ENCODE measurements at regions of chr16 and their contacts with region 1.

Region 1: DNA sequence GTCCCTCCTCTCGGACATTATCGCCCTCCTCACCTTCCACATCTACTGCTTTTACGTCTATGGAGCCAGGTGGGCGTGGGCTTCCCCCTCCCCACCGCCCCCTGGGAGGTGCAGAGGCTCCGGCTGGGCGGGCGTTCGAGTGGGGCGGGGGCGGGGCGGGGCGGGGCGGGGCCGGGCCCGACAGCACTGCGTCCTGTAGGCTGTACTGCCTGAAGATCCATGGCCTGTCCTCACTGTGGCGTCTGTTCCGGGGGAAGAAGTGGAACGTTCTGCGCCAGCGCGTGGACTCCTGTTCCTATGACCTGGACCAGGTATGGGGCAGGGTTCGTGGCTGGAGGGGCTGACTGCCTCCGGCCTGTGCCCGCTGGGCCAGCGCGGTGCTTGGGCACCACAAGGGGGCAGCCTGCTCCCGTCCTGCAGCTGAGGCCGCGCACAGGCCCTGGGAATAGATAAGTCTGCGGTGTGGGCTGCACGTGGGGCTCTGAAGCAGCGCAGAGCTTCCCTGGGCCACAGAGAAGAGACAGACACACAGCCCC is 9.2 kb downstream of the PIGQ start:
- DNase-seq: peak; percentile 64 to 94
- H3K4me3 ChIP-seq: peak overlapping the region in 3 of 4 experiments; percentile 18 to 47 (median 29); a peak in 5 of 8 replicates
- H3K27ac ChIP-seq: no peak overlapping the region
- H3K4me1 ChIP-seq: peaks cover 0 to 16% (median 12%) of the 10 kb centered on the region in 4 experiments; a peak in 6 of 7 replicates
- H3K27me3 ChIP-seq: peaks cover 0 to 2% (median 0%) of the 10 kb centered on the region in 4 experiments; a peak in 2 of 7 replicates
- CTCF ChIP-seq: peak in 2 of 3 experiments; percentile 90 to 96; a peak in 3 of 4 replicates
- EP300 ChIP-seq: no peak
- POLR2A ChIP-seq: no peak
- RAD21 ChIP-seq: peak; percentile 83 to 86

Region 2: GRCh38 chr16:339680-340079 is 239.3 kb before region 1 on chr16:
- CTCF ChIA-PET with region 1: no interaction called
- POLR2A ChIA-PET with region 1: no interaction called
- DNase-seq: no peak
- H3K4me3 ChIP-seq: no peak overlapping the region
- H3K27ac ChIP-seq: no peak overlapping the region
- H3K4me1 ChIP-seq: peaks cover 0 to 2% (median 0%) of the 10 kb centered on the region in 4 experiments; a peak in 1 of 7 replicates
- H3K27me3 ChIP-seq: no peaks in the 10 kb centered on the region
- CTCF ChIP-seq: no peak
- EP300 ChIP-seq: no peak
- POLR2A ChIP-seq: no peak
- RAD21 ChIP-seq: no peak

Region 3: DNA sequence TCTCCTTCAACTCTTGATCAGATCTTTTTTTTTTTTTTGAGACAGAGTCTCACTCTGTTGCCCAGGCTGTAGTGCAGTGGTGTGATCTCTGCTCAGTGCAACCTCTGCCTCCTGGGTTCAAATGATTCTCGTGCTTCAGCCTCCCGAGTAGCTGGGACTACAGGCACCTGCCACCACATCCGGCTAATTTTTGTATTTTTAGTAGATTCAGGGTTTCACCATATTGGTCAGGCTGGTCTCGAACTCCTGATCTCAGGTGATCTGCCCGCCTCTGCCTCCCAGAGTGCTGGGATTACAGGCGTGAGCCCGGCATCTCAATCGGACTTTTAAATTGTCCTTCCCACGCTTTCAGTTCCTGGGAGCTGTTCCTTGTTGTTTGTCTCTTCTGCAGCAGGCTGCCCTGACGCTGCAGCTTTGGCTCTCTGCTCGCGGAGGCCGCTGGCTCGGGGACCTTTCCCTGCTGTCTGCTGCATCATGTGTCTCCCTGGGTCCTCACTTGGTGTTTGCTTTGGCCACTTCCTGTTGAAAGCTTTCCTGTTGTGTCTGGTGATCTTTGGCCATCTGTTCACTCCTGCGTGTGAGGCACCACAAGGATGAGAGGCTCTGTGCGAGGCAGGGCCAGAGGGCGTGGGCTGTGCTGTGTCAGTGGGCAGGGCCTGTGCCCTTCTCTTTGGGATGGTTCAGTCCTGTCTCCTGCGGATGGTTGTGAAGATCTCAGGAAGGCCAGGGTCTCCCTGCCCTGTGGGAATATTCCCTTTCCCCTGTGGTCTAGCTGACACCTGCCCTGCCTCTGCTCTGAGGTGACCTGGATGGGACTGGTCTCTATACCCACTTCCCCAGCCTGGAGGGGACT is 69.8 kb before region 1 on chr16:
- CTCF ChIA-PET with region 1: no interaction called
- POLR2A ChIA-PET with region 1: no interaction called
- DNase-seq: no peak
- H3K4me3 ChIP-seq: no peak overlapping the region
- H3K27ac ChIP-seq: no peak overlapping the region; the same call in 1 of the 2 replicates
- H3K4me1 ChIP-seq: no peaks in the 10 kb centered on the region; a peak in 1 of 7 replicates
- H3K27me3 ChIP-seq: no peaks in the 10 kb centered on the region
- CTCF ChIP-seq: no peak
- EP300 ChIP-seq: no peak
- POLR2A ChIP-seq: no peak
- RAD21 ChIP-seq: no peak

Region 4: GRCh38 chr16:554640-555365 is 24.1 kb before region 1 on chr16:
- CTCF ChIA-PET with region 1: interaction called, 21 read pairs
- POLR2A ChIA-PET with region 1: interaction called, 5 read pairs
- DNase-seq: no peak
- H3K4me3 ChIP-seq: no peak overlapping the region
- H3K27ac ChIP-seq: no peak overlapping the region
- H3K4me1 ChIP-seq: peaks cover 0 to 8% (median 2%) of the 10 kb centered on the region in 4 experiments; a peak in 4 of 7 replicates
- H3K27me3 ChIP-seq: peaks cover 4 to 20% (median 14%) of the 10 kb centered on the region in 4 experiments; a peak in 6 of 7 replicates
- CTCF ChIP-seq: no peak
- EP300 ChIP-seq: no peak
- POLR2A ChIP-seq: no peak
- RAD21 ChIP-seq: no peak

Region 5: DNA sequence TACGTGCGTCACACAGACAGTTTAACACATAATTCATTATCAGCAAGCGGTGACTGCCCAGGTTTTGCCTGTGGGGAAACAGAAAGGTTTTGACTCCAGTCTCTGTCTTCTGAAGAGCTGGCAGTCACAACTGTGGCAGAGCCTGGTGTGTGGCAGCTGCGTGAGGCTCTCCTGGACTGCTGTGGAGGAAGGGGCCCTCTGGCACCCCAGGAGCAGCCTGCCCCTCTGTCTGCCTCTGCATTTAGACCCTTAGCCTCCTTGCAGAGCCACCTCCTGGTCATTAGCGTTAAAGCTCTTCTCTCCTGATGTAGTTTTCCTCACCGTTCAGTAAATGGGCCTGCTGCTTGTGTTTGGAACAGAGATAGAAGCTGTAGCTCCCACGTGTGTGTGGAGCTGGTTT is 21.8 kb after region 1 on chr16:
- CTCF ChIA-PET with region 1: interaction called, 35 read pairs
- POLR2A ChIA-PET with region 1: interaction called, 3 read pairs
- DNase-seq: no peak
- H3K4me3 ChIP-seq: no peak overlapping the region
- H3K27ac ChIP-seq: no peak overlapping the region
- H3K4me1 ChIP-seq: peaks cover 0 to 2% (median 0%) of the 10 kb centered on the region in 4 experiments; a peak in 1 of 7 replicates
- H3K27me3 ChIP-seq: no peaks in the 10 kb centered on the region; a peak in 2 of 7 replicates
- CTCF ChIP-seq: peak; percentile 20 to 67 (median 54)
- EP300 ChIP-seq: no peak
- POLR2A ChIP-seq: no peak
- RAD21 ChIP-seq: peak; percentile 25 to 48; a peak in 3 of 4 replicates

Region 6: GRCh38 chr16:621528-622105 is 42.7 kb after region 1 on chr16:
- CTCF ChIA-PET with region 1: interaction called, 22 read pairs
- POLR2A ChIA-PET with region 1: interaction called, 3 read pairs
- DNase-seq: no peak
- H3K4me3 ChIP-seq: no peak overlapping the region
- H3K27ac ChIP-seq: no peak overlapping the region
- H3K4me1 ChIP-seq: peaks cover 0 to 14% (median 5%) of the 10 kb centered on the region in 4 experiments; a peak in 5 of 7 replicates
- H3K27me3 ChIP-seq: no peaks in the 10 kb centered on the region
- CTCF ChIP-seq: no peak
- EP300 ChIP-seq: no peak
- POLR2A ChIP-seq: no peak
- RAD21 ChIP-seq: no peak

Region 7: GRCh38 chr16:648781-649589 is 70.0 kb after region 1 on chr16 and contains the start of gene WDR90:
- CTCF ChIA-PET with region 1: interaction called, 18 read pairs
- POLR2A ChIA-PET with region 1: interaction called, 4 read pairs
- DNase-seq: peak in 1 of 2 experiments; percentile 97
- H3K4me3 ChIP-seq: peak within 1 kb of the TSS; percentile 59 to 76 (median 68)
- H3K27ac ChIP-seq: peak within 1 kb of the TSS; percentile 35; the same call in 1 of the 2 replicates
- H3K4me1 ChIP-seq: peaks cover 0 to 4% (median under 1%) of the 10 kb centered on the region in 4 experiments; a peak in 4 of 7 replicates
- H3K27me3 ChIP-seq: no peaks in the 10 kb centered on the region
- CTCF ChIP-seq: no peak
- EP300 ChIP-seq: no peak
- POLR2A ChIP-seq: peak in 1 of 2 experiments; percentile 49; a peak in 1 of 3 replicates
- RAD21 ChIP-seq: no peak
- total RNA-seq, gene WDR90: 44.4 and 47.2 TPM in 2 replicates

Measured in H1 (cell line).